ENCODE measurements at regions of chr3 and their contacts with region 1.

Region 1: DNA sequence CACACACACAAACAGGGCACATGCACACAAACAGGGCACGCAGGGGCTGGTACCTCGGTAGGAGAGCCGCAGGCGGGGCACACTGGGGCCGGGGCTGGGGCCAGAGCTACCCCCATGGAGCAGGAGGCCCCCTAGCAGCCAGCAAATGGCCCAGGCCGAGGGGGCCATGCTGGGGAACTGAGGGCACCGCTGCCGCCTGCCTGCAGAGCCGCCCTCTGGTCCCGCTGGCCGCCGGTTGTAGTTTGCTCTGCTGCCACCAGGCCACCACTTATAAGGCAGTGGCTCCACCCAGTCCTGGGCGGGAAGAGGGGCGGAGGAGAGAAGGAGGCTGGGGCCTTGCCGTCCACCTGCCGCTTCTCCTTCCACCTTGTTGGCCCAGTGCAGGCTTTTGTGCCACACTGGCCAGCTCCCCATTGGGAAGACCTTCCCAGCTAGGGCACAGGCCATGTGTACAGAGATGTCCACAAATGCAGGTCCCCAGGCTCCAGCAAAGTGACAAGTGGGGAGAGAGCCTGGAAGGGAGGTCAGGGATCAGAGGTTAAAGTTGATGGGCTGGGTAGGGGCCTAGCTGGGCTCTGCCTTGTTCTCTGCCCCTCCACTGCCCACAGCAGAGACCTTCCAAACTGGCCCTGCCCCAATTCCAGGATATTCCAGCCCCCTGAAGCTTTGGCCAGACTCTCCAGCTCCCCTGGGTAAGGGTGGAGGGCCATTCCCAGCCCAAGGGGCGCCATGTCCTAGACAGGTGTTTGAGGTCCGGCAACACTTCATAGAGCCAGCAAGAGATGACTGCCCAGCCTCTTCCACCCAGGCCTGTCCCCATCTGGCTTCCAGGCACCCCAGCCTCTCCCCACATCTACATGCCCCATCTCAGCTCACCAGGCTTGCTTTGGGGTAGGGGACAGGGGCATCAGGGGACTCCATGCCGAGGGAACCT is at the start of gene SEMA3G:
- DNase-seq: peak; percentile 72
- H3K4me3 ChIP-seq: no peak within 1 kb of the TSS
- H3K27ac ChIP-seq: no peak within 1 kb of the TSS
- H3K4me1 ChIP-seq: no peaks in the 10 kb centered on the region
- CTCF ChIP-seq: peak; percentile 48
- total RNA-seq, gene SEMA3G: not detected in 2 replicates

Region 2: DNA sequence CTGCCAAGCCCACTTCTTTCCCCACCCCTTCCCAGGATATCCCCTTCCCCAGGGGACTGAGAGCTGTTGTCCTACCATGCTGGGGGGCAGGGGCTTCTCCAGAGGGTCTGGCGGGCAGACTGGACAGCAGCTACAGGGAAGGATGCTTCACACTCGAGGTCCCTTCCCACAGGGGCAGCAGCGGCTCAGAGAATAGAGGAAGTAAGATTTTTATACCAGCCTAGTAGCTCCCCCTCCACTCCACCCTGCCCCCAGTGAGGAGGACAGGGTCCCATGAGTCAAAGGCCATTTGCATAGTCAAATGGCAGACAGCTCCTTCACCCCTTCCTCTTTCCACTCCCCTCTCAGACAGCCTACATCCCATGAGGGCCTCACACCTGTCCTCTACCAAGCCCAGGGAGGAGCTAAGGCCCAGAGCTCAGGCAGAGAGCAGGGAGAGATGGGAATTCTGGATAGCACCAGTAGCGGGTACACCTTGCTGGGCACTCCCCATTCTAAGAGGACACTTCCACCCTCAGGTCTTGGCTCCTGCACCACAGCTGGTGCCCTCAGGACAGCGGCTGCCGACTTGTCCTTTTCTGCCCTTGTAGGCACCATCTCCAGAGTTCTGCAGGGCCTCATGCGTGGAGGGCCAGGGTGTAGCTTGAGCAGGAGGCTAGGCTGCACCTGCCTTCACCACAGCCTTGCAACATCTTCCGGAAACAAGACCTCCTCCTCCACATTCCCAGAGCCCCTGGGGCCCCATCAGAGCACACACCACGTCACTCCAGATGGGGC is 219.5 kb before region 1 on chr3 and contains the start of gene TLR9:
- CTCF ChIA-PET with region 1: no interaction called
- POLR2A ChIA-PET with region 1: no interaction called
- intact Hi-C with region 1: loop called (anchors 5 kb)
- DNase-seq: peak; percentile 96
- H3K4me3 ChIP-seq: peak within 1 kb of the TSS; percentile 73
- H3K27ac ChIP-seq: peak within 1 kb of the TSS; percentile 91
- H3K4me1 ChIP-seq: peaks cover 38% of the 10 kb centered on the region
- CTCF ChIP-seq: no peak
- total RNA-seq, gene TLR9: 0.51 and 1.7 TPM in 2 replicates

Region 3: GRCh38 chr3:52339612-52340011 is 105.5 kb before region 1 on chr3:
- CTCF ChIA-PET with region 1: no interaction called
- POLR2A ChIA-PET with region 1: no interaction called
- intact Hi-C with region 1: loop called (anchors 1 kb)
- DNase-seq: peak; percentile 84
- H3K4me3 ChIP-seq: no peak overlapping the region
- H3K27ac ChIP-seq: no peak overlapping the region
- H3K4me1 ChIP-seq: peaks cover 18% of the 10 kb centered on the region
- CTCF ChIP-seq: peak; percentile 93

Region 4: DNA sequence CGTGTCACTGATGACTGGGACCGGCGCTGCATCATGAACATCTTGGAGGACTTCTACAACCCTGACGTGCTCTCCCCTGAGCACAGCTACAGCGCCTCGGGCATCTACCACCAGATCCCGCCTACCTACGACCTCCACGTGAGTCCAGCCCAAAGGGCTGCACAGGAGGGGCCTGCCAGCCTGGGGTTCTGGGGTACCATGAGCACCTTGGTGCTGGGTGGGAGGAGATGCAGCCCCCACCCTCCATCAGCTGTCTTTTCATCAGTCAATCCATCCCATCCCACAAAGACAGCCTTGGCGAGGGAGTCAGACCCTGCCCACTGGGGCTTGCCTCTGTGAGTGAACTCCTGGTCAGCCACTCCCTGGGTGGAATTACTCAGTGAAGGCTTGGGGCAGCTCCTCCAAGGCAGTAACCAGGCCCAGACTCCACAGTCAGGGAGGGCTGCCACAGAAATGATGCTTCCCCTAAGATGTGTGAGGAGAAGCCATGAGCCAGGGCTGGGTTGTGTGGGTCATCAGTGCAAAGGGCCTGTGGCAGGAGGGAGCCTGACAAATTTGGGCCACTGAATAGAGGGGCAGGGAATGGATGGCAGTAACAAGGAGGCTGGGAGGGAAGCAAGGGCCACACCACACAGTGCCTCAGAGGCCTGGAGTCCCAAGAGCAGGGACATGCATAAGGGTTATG is 48.1 kb before region 1 on chr3:
- CTCF ChIA-PET with region 1: no interaction called
- POLR2A ChIA-PET with region 1: no interaction called
- intact Hi-C with region 1: no loop called
- DNase-seq: no peak
- H3K4me3 ChIP-seq: no peak overlapping the region
- H3K27ac ChIP-seq: no peak overlapping the region
- H3K4me1 ChIP-seq: no peaks in the 10 kb centered on the region
- CTCF ChIP-seq: no peak

Region 5: DNA sequence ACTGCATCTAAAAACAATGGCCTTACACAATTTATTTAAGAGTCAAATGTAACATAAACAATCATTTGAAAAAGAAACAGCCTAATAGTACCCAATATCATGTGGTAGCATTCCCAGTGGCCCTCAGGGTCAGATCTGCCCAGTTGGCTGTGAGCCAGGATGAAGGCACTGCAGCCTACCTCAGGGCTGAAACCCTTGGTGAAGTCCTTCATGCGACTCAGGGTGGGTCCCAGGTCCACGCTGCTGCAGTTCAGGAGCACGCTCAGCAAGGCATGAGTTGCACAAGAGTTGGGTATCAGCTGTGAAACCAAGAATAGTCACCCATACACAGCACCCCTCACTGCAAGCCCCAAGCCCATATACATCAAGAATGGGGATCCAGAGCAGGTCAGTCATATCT is 37.3 kb before region 1 on chr3:
- CTCF ChIA-PET with region 1: interaction called, 13 read pairs
- POLR2A ChIA-PET with region 1: interaction called, 8 read pairs
- intact Hi-C with region 1: loop called (anchors 1 kb)
- DNase-seq: no peak
- H3K4me3 ChIP-seq: no peak overlapping the region
- H3K27ac ChIP-seq: no peak overlapping the region
- H3K4me1 ChIP-seq: peaks cover 26% of the 10 kb centered on the region
- CTCF ChIP-seq: no peak

Measured in OCI-LY7 (cell line).